ENCODE measurements at regions of chr16 and their contacts with region 1.

Region 1: GRCh38 chr16:50202926-50203624 is 50.0 kb downstream of the TENT4B start:
- DNase-seq: peak; percentile 44 to 88
- H3K4me3 ChIP-seq: no peak overlapping the region
- H3K27ac ChIP-seq: peak overlapping the region; percentile 71
- H3K4me1 ChIP-seq: peaks cover 28% of the 10 kb centered on the region
- H3K27me3 ChIP-seq: no peaks in the 10 kb centered on the region
- CTCF ChIP-seq: no peak

Region 2: GRCh38 chr16:50102051-50102746 is 100.9 kb before region 1 on chr16:
- CTCF ChIA-PET with region 1: no interaction called
- POLR2A ChIA-PET with region 1: no interaction called
- intact Hi-C with region 1: no loop called
- DNase-seq: no peak
- H3K4me3 ChIP-seq: no peak overlapping the region
- H3K27ac ChIP-seq: no peak overlapping the region
- H3K4me1 ChIP-seq: no peaks in the 10 kb centered on the region
- H3K27me3 ChIP-seq: no peaks in the 10 kb centered on the region
- CTCF ChIP-seq: no peak

Region 3: GRCh38 chr16:50152807-50153452 is 50.1 kb before region 1 on chr16 and contains the start of gene TENT4B:
- CTCF ChIA-PET with region 1: no interaction called
- POLR2A ChIA-PET with region 1: no interaction called
- intact Hi-C with region 1: loop called (anchors 2 kb)
- DNase-seq: peak; percentile 56 to 88
- H3K4me3 ChIP-seq: peak within 1 kb of the TSS; percentile 99
- H3K27ac ChIP-seq: peak within 1 kb of the TSS; percentile 66
- H3K4me1 ChIP-seq: peaks cover 20% of the 10 kb centered on the region
- H3K27me3 ChIP-seq: no peaks in the 10 kb centered on the region
- CTCF ChIP-seq: no peak
- total RNA-seq, gene TENT4B: 6.1 and 11.4 TPM in 2 replicates

Region 4: DNA sequence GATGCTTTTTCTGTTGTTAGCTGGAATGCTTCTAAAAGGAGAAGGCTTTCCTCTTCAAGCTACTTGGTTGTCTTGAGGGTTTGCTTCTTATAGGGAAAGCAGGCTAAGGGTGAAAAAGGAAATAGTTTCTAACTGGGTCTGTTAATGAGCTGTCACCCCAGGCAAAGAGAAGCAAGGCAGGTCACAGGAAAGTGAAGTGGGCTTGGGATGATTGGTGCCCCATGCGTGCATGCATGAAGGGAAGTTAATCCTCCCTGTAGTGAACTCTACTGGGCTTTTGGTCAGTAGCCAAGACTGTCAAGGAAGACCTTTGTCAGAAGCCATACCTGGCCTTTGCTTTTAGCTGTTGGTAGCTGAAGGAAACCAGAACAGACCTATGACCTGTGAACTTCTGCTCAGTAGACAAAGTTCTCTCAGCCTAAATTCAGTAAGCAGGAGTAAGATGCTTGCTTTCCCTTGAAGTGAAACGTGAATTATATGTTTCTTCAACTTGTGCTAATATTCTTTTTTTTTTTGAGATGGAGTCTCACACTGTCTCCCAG is 33.4 kb before region 1 on chr16:
- CTCF ChIA-PET with region 1: no interaction called
- POLR2A ChIA-PET with region 1: no interaction called
- intact Hi-C with region 1: loop called (anchors 2 kb)
- DNase-seq: no peak
- H3K4me3 ChIP-seq: no peak overlapping the region
- H3K27ac ChIP-seq: no peak overlapping the region
- H3K4me1 ChIP-seq: peaks cover 5% of the 10 kb centered on the region; the same call in 1 of the 2 replicates
- H3K27me3 ChIP-seq: no peaks in the 10 kb centered on the region
- CTCF ChIP-seq: no peak

Region 5: GRCh38 chr16:50182441-50182840 is 20.6 kb before region 1 on chr16:
- CTCF ChIA-PET with region 1: interaction called, 11 read pairs
- POLR2A ChIA-PET with region 1: no interaction called
- intact Hi-C with region 1: no loop called
- DNase-seq: no peak
- H3K4me3 ChIP-seq: no peak overlapping the region
- H3K27ac ChIP-seq: no peak overlapping the region
- H3K4me1 ChIP-seq: no peaks in the 10 kb centered on the region
- H3K27me3 ChIP-seq: no peaks in the 10 kb centered on the region
- CTCF ChIP-seq: no peak

Region 6: DNA sequence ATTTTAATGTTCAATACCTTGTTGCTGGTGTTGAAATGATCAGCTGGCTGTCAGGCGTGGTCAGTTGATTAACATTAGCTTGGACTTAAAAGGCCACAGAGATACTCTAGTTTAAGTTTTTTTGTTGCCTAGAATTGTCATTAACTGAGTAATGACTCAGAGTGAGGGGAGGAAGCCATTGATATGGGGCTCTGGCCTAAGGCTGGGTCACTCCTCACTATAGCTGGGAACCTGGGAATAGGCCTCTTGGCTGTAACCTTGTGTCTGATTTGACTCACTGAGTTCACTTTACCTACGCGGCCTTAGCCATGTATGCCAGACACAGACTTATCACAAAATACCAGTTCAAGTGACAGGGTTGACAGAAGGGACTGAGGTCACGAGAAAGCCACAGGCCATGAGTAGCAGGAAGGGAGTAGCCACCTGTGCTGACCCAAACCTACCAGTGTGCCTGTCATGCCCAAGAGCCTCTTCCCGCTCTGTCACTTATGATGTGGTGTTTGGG is 25.3 kb after region 1 on chr16:
- CTCF ChIA-PET with region 1: no interaction called
- POLR2A ChIA-PET with region 1: no interaction called
- intact Hi-C with region 1: no loop called
- DNase-seq: no peak
- H3K4me3 ChIP-seq: no peak overlapping the region
- H3K27ac ChIP-seq: no peak overlapping the region
- H3K4me1 ChIP-seq: peaks cover 4% of the 10 kb centered on the region
- H3K27me3 ChIP-seq: no peaks in the 10 kb centered on the region
- CTCF ChIP-seq: no peak

Region 7: GRCh38 chr16:50841081-50841886 is 638.2 kb after region 1 on chr16:
- CTCF ChIA-PET with region 1: no interaction called
- POLR2A ChIA-PET with region 1: no interaction called
- intact Hi-C with region 1: no loop called
- DNase-seq: no peak
- H3K4me3 ChIP-seq: no peak overlapping the region
- H3K27ac ChIP-seq: no peak overlapping the region
- H3K4me1 ChIP-seq: no peaks in the 10 kb centered on the region
- H3K27me3 ChIP-seq: peaks cover 41% of the 10 kb centered on the region
- CTCF ChIP-seq: no peak

Measured in PC-9 (cell line).